Heart left ventricle (tissue), 16 donors: ENCODE measurements at regions of chr2 and their contacts with region 1.

Region 1: GRCh38 chr2:183872131-183872530 is 726.2 kb upstream of the ZNF804A start:
- DNase-seq: no peak
- ATAC-seq: no peak
- H3K4me3 ChIP-seq: no peak overlapping the region
- H3K27ac ChIP-seq: no peak overlapping the region
- H3K4me1 ChIP-seq: no peaks in the 10 kb centered on the region
- H3K27me3 ChIP-seq: no peaks in the 10 kb centered on the region
- CTCF ChIP-seq: no peak
- POLR2A ChIP-seq: no peak

Region 2: DNA sequence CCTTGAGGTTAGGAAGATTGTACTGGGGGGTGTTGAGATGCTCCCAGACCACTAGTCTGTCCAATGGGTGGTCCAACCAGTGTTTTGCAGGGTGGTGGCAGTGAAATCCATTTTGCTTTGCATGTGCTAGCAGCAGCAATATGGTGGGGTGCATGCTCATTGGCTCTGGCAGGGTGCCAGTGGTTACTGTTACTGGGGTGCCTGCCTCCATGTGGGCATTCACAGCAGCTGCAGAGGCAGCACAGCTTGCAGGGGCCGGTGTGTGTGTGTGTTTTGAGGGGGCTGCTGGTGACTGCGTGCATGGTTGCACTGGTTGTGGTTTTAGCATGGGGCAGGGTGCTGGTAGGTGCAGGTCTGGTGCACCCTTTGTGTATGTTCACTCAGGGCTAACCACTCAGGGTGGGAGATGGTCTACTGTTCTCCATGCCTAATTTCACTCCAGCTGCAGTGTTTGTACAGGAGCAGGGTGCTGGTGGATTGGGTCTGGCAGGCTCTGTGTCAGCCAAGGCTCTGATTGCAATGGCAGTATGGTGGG is 482.5 kb before region 1 on chr2:
- intact Hi-C with region 1: no loop called
- DNase-seq: peak in 1 of 5 donors; percentile 5
- ATAC-seq: no peak
- H3K4me3 ChIP-seq: no peak overlapping the region
- H3K27ac ChIP-seq: no peak overlapping the region
- H3K4me1 ChIP-seq: no peaks in the 10 kb centered on the region
- H3K27me3 ChIP-seq: no peaks in the 10 kb centered on the region
- CTCF ChIP-seq: no peak
- POLR2A ChIP-seq: no peak

Region 3: GRCh38 chr2:183898641-183899040 is 26.5 kb after region 1 on chr2:
- intact Hi-C with region 1: loop called in 1 of 10 experiments (anchors 1 kb)
- DNase-seq: no peak
- ATAC-seq: no peak
- H3K4me3 ChIP-seq: no peak overlapping the region
- H3K27ac ChIP-seq: no peak overlapping the region
- H3K4me1 ChIP-seq: no peaks in the 10 kb centered on the region
- H3K27me3 ChIP-seq: no peaks in the 10 kb centered on the region
- CTCF ChIP-seq: no peak
- POLR2A ChIP-seq: no peak